Activated CD4-positive, alpha-beta memory T cell treated with anti-CD3 and anti-CD28 coated beads for 36 hours (primary cell): ENCODE measurements at regions of chr22 and their contacts with region 1.

Region 1: DNA sequence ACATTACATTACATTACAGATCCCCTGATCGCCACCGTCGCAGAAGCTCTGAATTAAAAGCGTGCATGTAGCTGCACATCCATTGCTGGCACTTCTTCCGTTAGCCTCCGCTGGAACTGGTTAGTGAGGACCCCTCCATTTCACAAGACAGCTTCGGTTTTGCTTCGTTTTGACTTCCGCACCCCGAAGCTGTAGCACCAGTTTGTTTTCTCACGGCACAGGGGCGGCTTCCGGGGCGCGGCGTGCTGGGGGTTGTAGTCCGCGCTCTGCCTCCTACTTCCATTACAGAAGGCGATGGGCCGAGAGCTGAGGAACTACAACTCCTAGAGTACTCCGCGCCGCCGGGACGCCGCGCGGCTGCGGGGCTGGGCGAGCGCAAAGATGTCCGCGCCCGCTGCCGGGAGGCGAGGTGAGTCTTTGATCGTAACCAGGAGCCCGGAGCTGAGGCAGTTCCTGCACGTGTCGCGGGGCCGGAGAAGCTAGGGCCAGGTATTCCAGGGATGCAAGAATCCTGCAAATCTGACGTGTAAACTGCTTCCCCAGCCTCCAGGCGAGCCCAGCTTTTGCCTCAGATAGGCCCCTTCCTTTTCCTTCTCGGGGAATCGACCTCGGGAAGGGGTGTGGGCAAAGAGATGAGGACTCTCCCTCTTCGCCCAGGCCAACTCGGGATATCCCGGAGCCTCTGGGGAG is at the start of gene PEX26:
- DNase-seq: peak; percentile 97
- H3K4me3 Mint-ChIP-seq: peak within 1 kb of the TSS; percentile 95
- H3K27ac Mint-ChIP-seq: peak within 1 kb of the TSS; percentile 96
- H3K4me1 Mint-ChIP-seq: peaks cover 51% of the 10 kb centered on the region
- H3K27me3 Mint-ChIP-seq: no peaks in the 10 kb centered on the region
- total RNA-seq, gene PEX26: 56.3 to 56.8 TPM

Region 2: DNA sequence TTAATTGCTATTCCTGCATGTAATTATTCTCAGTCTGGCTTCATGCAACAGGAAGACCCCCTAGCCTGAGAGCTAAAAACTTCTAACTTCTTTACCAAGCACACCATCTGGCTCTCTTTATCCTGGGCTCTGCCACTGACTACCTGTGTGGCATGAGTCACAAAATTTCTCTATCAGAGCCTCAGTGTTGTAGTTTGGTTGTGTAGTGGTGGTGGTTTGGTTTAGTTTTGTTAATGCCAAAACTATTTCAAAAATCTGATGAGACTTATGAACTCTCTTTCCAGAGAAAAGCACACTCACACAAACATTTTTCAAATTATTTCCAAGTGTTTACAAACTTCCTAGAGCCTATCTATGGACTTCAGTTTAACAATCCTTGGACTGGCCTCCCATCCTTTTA is 1000.5 kb before region 1 on chr22:
- CTCF ChIA-PET with region 1: interaction called, 5 read pairs
- POLR2A ChIA-PET with region 1: no interaction called
- intact Hi-C with region 1: loop called (anchors 1 kb)
- DNase-seq: no peak
- H3K4me3 Mint-ChIP-seq: no peak overlapping the region
- H3K27ac Mint-ChIP-seq: no peak overlapping the region
- H3K4me1 Mint-ChIP-seq: peaks cover 17% of the 10 kb centered on the region
- H3K27me3 Mint-ChIP-seq: peaks cover 6% of the 10 kb centered on the region

Region 3: DNA sequence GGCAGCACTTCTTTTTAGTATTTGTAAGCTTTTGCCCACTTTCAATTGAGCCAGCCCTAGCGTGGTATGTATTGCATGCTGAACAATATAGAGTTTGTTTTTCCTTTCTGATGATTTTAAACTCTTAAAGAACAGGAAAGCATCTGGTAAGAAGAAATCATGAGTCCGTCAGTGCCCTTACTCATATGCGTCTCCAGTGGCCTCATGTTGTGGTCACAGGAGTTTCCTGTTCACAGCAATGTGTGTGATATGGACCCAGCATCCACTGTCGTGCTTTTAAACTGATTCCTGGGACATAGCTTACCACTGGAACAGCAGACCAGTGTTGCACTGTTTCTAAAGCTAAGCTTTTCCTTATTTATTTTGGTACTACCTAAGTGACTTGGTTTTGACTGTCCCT is 343.6 kb before region 1 on chr22:
- CTCF ChIA-PET with region 1: interaction called, 10 read pairs
- POLR2A ChIA-PET with region 1: no interaction called
- intact Hi-C with region 1: no loop called
- DNase-seq: peak; percentile 65
- H3K4me3 Mint-ChIP-seq: no peak overlapping the region
- H3K27ac Mint-ChIP-seq: peak overlapping the region; percentile 19
- H3K4me1 Mint-ChIP-seq: peaks cover 15% of the 10 kb centered on the region
- H3K27me3 Mint-ChIP-seq: no peaks in the 10 kb centered on the region

Region 4: GRCh38 chr22:17773606-17774205 is 304.1 kb before region 1 on chr22:
- CTCF ChIA-PET with region 1: interaction called, 10 read pairs
- POLR2A ChIA-PET with region 1: interaction called, 3 read pairs
- intact Hi-C with region 1: loop called (anchors 5 kb)
- DNase-seq: peak; percentile 82
- H3K4me3 Mint-ChIP-seq: peak overlapping the region; percentile 76
- H3K27ac Mint-ChIP-seq: no peak overlapping the region
- H3K4me1 Mint-ChIP-seq: peaks cover 60% of the 10 kb centered on the region
- H3K27me3 Mint-ChIP-seq: peaks cover 7% of the 10 kb centered on the region

Region 5: GRCh38 chr22:17980638-17981051 is 97.1 kb before region 1 on chr22:
- CTCF ChIA-PET with region 1: no interaction called
- POLR2A ChIA-PET with region 1: no interaction called
- intact Hi-C with region 1: no loop called
- DNase-seq: peak; percentile 71
- H3K4me3 Mint-ChIP-seq: peak overlapping the region; percentile 36
- H3K27ac Mint-ChIP-seq: no peak overlapping the region
- H3K4me1 Mint-ChIP-seq: peaks cover 33% of the 10 kb centered on the region
- H3K27me3 Mint-ChIP-seq: no peaks in the 10 kb centered on the region

Region 6: GRCh38 chr22:18001040-18001893 is 76.5 kb before region 1 on chr22:
- CTCF ChIA-PET with region 1: interaction called, 11 read pairs
- POLR2A ChIA-PET with region 1: interaction called, 3 read pairs
- intact Hi-C with region 1: loop called (anchors 1 kb)
- DNase-seq: peak; percentile 86
- H3K4me3 Mint-ChIP-seq: peak overlapping the region; percentile 80
- H3K27ac Mint-ChIP-seq: peak overlapping the region; percentile 94
- H3K4me1 Mint-ChIP-seq: peaks cover 44% of the 10 kb centered on the region
- H3K27me3 Mint-ChIP-seq: peaks cover 2% of the 10 kb centered on the region

Region 7: GRCh38 chr22:18088825-18089568 is 11.2 kb after region 1 on chr22:
- CTCF ChIA-PET with region 1: interaction called, 8 read pairs
- POLR2A ChIA-PET with region 1: interaction called, 24 read pairs
- intact Hi-C with region 1: no loop called
- DNase-seq: peak; percentile 80
- H3K4me3 Mint-ChIP-seq: no peak overlapping the region
- H3K27ac Mint-ChIP-seq: peak overlapping the region; percentile 70
- H3K4me1 Mint-ChIP-seq: peaks cover 34% of the 10 kb centered on the region
- H3K27me3 Mint-ChIP-seq: no peaks in the 10 kb centered on the region

Region 8: GRCh38 chr22:18152519-18152918 is 74.7 kb after region 1 on chr22:
- CTCF ChIA-PET with region 1: interaction called, 14 read pairs
- POLR2A ChIA-PET with region 1: interaction called, 12 read pairs
- intact Hi-C with region 1: loop called (anchors 1 kb)
- DNase-seq: peak; percentile 29
- H3K4me3 Mint-ChIP-seq: no peak overlapping the region
- H3K27ac Mint-ChIP-seq: no peak overlapping the region
- H3K4me1 Mint-ChIP-seq: peaks cover 19% of the 10 kb centered on the region
- H3K27me3 Mint-ChIP-seq: no peaks in the 10 kb centered on the region